ENCODE measurements at regions of chr6 and their contacts with region 1.

Region 1: GRCh38 chr6:25556516-25556915 is 95.5 kb upstream of the SCGN start:
- DNase-seq: peak; percentile 64
- ATAC-seq: peak; percentile 91
- H3K4me3 ChIP-seq: no peak overlapping the region
- H3K27ac ChIP-seq: no peak overlapping the region
- H3K4me1 ChIP-seq: no peaks in the 10 kb centered on the region
- H3K27me3 ChIP-seq: no peaks in the 10 kb centered on the region
- CTCF ChIP-seq: peak; percentile 88

Region 2: GRCh38 chr6:25223490-25223991 is 333.0 kb before region 1 on chr6:
- CTCF ChIA-PET with region 1: interaction called, 4 read pairs
- POLR2A ChIA-PET with region 1: no interaction called
- in situ Hi-C with region 1: no loop called
- intact Hi-C with region 1: loop called (anchors 1 kb)
- DNase-seq: peak; percentile 45
- ATAC-seq: no peak
- H3K4me3 ChIP-seq: no peak overlapping the region
- H3K27ac ChIP-seq: no peak overlapping the region
- H3K4me1 ChIP-seq: no peaks in the 10 kb centered on the region; the same call in none of the 2 replicates
- H3K27me3 ChIP-seq: no peaks in the 10 kb centered on the region; the same call in 1 of the 2 replicates
- CTCF ChIP-seq: peak; percentile 84

Region 3: DNA sequence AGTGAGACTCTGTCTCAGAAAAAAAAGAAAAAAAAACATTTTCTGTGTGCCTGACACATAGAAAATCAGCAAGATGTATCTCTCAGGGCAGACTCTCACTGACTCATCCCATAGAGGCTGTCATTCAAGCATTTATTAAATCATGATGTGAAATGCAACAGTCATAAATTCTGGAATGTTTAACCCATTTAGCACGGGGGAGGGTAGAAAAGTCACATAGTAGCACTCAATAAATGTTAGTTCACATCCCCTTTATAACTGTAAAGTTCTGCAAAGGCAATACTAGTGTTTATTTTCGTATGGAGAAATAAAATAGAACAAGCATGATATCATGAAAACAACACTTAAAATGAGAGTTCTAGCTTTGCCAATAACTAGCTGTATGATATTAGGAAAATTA is 292.9 kb before region 1 on chr6:
- CTCF ChIA-PET with region 1: interaction called, 6 read pairs
- POLR2A ChIA-PET with region 1: no interaction called
- in situ Hi-C with region 1: no loop called
- intact Hi-C with region 1: loop called (anchors 5 kb)
- DNase-seq: no peak
- ATAC-seq: no peak
- H3K4me3 ChIP-seq: no peak overlapping the region
- H3K27ac ChIP-seq: no peak overlapping the region
- H3K4me1 ChIP-seq: no peaks in the 10 kb centered on the region
- H3K27me3 ChIP-seq: peaks cover 3% of the 10 kb centered on the region; the same call in 1 of the 2 replicates
- CTCF ChIP-seq: no peak